Activated CD4-positive, alpha-beta memory T cell treated with anti-CD3 and anti-CD28 coated beads for 36 hours (primary cell): ENCODE measurements at regions of chr13 and their contacts with region 1.

Region 1: DNA sequence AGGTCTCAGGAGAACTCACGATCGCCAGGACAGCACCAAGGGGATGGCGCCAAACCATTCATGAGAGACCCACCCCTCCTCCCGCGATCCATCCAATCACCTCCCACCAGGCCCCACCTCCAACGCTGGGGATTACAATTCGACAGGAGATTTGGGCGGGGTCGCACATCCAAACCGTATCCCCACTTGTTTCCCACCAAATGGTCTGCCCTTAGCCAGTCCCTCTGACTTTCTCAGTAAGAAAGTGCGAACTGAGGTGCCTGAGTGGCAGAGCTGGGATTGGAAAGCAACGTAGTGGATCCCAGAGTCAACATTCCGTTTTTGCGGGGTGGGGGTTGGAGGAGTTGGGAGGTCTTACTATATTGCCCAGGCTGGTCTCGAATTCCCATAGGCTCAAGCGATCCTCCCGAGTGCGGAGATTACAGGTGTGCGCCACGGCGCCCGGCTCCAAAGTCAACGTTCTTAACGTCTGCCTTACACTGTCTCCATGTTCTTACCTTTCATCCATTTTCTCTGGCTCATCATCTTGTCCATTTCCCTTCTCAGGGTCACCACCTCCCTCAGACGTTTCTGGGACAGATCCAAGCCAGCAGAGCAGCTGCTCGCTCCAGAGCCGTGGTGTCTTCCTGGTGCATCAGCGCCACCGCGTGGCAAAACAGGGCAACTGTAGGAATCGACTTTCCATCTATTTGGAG is 102.7 kb upstream of the ABCC4 start:
- DNase-seq: peak; percentile 84
- H3K4me3 Mint-ChIP-seq: peak overlapping the region; percentile 79
- H3K27ac Mint-ChIP-seq: no peak overlapping the region
- H3K4me1 Mint-ChIP-seq: peaks cover 5% of the 10 kb centered on the region
- H3K27me3 Mint-ChIP-seq: peaks cover 6% of the 10 kb centered on the region

Region 2: GRCh38 chr13:94674609-94675348 is 729.2 kb before region 1 on chr13:
- CTCF ChIA-PET with region 1: interaction called, 19 read pairs
- POLR2A ChIA-PET with region 1: no interaction called
- intact Hi-C with region 1: loop called (anchors 10 kb)
- DNase-seq: peak; percentile 60
- H3K4me3 Mint-ChIP-seq: no peak overlapping the region
- H3K27ac Mint-ChIP-seq: no peak overlapping the region
- H3K4me1 Mint-ChIP-seq: no peaks in the 10 kb centered on the region
- H3K27me3 Mint-ChIP-seq: peaks cover 29% of the 10 kb centered on the region

Region 3: DNA sequence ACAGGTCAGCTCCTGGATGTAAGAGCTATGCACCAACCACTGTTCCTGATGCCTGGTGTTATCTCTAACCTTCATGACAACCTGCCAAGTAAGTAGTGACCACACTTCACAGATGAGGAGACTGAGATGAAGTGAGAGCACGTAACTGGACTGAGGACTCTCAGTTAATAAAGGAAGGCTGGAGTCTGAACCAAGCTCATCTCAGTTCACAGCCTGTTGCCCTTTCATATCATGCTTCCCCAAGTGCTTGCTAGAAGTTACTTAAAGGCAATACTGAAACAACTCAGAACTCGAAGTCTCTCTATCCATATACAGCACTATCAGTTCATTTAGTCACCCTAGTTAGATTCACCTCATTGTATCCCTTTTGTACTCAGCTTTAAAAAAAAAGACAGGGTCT is 222.4 kb before region 1 on chr13:
- CTCF ChIA-PET with region 1: interaction called, 39 read pairs
- POLR2A ChIA-PET with region 1: interaction called, 3 read pairs
- intact Hi-C with region 1: no loop called
- DNase-seq: no peak
- H3K4me3 Mint-ChIP-seq: no peak overlapping the region
- H3K27ac Mint-ChIP-seq: peak overlapping the region; percentile 57
- H3K4me1 Mint-ChIP-seq: peaks cover 64% of the 10 kb centered on the region
- H3K27me3 Mint-ChIP-seq: no peaks in the 10 kb centered on the region

Region 4: DNA sequence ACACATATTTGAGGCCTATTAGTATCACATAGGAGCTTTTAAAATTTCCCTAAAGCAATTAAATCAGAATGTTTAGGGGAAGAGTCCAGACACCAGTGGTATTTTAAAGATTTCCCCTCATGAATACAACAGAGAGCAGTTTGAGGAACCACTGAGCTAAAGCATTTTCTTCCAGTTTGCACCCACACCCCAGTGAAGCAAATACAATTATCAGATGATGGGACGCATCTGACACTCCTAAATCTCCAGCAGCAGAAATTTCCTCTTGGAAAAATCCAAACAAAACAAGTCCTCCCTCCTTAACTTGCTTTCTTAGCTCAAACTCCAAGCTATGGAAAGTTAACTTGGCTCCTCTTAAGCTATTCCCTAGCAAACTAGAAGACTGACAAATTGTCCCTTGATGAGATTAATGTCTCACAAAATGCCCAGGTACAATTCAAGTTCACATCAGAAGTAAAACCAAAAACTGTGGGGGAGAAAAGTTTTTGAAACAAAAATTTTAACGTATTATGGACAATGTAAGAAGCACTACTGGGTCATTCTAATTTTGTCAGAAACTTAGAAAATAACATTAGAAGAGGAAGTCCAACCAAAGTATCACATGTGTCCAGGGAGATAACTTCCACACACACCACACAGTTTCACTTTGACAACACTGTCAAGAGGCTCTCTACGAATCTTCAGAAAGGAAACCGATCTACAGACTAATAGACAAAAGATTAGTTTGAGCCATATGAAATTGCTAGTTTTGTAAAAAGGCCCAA is 176.9 kb before region 1 on chr13:
- CTCF ChIA-PET with region 1: interaction called, 10 read pairs
- POLR2A ChIA-PET with region 1: no interaction called
- intact Hi-C with region 1: no loop called
- DNase-seq: no peak
- H3K4me3 Mint-ChIP-seq: no peak overlapping the region
- H3K27ac Mint-ChIP-seq: no peak overlapping the region
- H3K4me1 Mint-ChIP-seq: peaks cover 6% of the 10 kb centered on the region
- H3K27me3 Mint-ChIP-seq: no peaks in the 10 kb centered on the region

Region 5: DNA sequence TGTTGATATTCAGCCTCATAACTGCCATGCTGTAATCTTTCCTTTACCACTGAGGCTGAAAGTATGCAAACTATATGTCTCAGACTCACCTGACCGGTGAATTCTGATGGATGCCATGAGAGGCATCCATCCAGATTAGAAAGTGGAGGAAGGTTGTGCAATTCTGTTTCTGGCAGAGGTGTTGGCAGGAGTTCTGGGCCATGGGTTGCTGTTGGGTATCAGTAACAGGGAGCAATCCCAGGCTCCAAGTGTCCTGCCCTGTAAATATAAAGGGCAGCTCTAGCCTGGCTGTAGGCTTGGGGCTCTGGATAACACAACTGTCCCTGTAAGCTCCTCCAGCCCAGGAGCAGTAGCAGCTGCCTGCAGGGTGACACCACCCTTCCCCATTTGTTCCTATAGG is 25.4 kb before region 1 on chr13:
- CTCF ChIA-PET with region 1: interaction called, 31 read pairs
- POLR2A ChIA-PET with region 1: no interaction called
- intact Hi-C with region 1: loop called (anchors 1 kb)
- DNase-seq: no peak
- H3K4me3 Mint-ChIP-seq: no peak overlapping the region
- H3K27ac Mint-ChIP-seq: no peak overlapping the region
- H3K4me1 Mint-ChIP-seq: peaks cover 6% of the 10 kb centered on the region
- H3K27me3 Mint-ChIP-seq: peaks cover 3% of the 10 kb centered on the region

Region 6: GRCh38 chr13:95418946-95419345 is 15.0 kb after region 1 on chr13:
- CTCF ChIA-PET with region 1: interaction called, 13 read pairs
- POLR2A ChIA-PET with region 1: no interaction called
- intact Hi-C with region 1: no loop called
- DNase-seq: no peak
- H3K4me3 Mint-ChIP-seq: no peak overlapping the region
- H3K27ac Mint-ChIP-seq: no peak overlapping the region
- H3K4me1 Mint-ChIP-seq: no peaks in the 10 kb centered on the region
- H3K27me3 Mint-ChIP-seq: peaks cover 6% of the 10 kb centered on the region

Region 7: DNA sequence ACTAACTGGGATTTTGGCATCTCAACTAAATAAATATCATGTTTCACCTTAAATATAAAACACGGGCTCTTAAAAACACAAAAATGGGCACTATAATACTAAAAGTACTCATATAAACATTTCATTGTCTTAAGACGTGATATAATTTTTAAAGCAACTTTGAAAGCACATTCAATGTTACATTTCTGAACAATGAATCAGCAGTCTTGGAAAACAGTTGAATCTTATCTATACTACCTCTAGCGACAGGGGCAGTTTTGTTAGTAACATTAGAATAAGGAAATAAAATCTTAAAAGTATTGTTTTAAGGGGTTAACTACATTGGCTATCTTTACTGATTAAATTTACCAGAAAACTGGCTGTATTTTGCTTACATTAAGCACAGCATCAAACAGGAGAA is 492.3 kb after region 1 on chr13:
- CTCF ChIA-PET with region 1: no interaction called
- POLR2A ChIA-PET with region 1: no interaction called
- intact Hi-C with region 1: no loop called
- DNase-seq: no peak
- H3K4me3 Mint-ChIP-seq: no peak overlapping the region
- H3K27ac Mint-ChIP-seq: no peak overlapping the region
- H3K4me1 Mint-ChIP-seq: no peaks in the 10 kb centered on the region
- H3K27me3 Mint-ChIP-seq: peaks cover 1% of the 10 kb centered on the region